ENCODE measurements at regions of chr1 and their contacts with region 1.

Region 1: GRCh38 chr1:26145041-26145959 is 13.6 kb upstream of the FAM110D start:
- DNase-seq: peak; percentile 83
- H3K4me3 Mint-ChIP-seq: no peak overlapping the region
- H3K27ac Mint-ChIP-seq: no peak overlapping the region
- H3K4me1 Mint-ChIP-seq: peaks cover 2% of the 10 kb centered on the region
- H3K27me3 Mint-ChIP-seq: peaks cover 21% of the 10 kb centered on the region

Region 2: GRCh38 chr1:25971066-25971810 is 174.1 kb before region 1 on chr1:
- CTCF ChIA-PET with region 1: no interaction called
- POLR2A ChIA-PET with region 1: no interaction called
- DNase-seq: peak; percentile 39
- H3K4me3 Mint-ChIP-seq: peak overlapping the region; percentile 13
- H3K27ac Mint-ChIP-seq: peak overlapping the region; percentile 89
- H3K4me1 Mint-ChIP-seq: peaks cover 34% of the 10 kb centered on the region
- H3K27me3 Mint-ChIP-seq: no peaks in the 10 kb centered on the region

Region 3: DNA sequence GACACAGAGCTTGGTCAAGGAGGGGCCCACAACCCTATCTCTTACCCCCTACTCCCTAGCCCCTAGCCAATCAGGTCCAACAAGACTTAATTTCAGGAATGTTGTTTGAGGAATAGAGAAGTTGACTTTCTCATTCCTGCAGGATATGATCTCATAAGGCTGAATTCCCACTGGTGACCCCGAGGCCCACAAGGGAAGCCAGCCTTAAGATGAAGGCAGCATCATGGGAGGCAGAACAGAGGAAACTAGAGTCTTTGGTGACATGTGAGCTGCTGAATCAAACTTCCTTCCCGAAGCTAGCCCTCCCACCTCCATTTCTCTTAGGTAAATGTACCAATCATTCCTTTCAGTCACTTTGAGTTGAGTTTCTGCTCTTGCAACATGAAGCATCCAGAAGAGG is 42.8 kb before region 1 on chr1:
- CTCF ChIA-PET with region 1: interaction called, 44 read pairs
- POLR2A ChIA-PET with region 1: interaction called, 3 read pairs
- DNase-seq: no peak
- H3K4me3 Mint-ChIP-seq: no peak overlapping the region
- H3K27ac Mint-ChIP-seq: no peak overlapping the region
- H3K4me1 Mint-ChIP-seq: peaks cover 18% of the 10 kb centered on the region
- H3K27me3 Mint-ChIP-seq: peaks cover 11% of the 10 kb centered on the region

Region 4: DNA sequence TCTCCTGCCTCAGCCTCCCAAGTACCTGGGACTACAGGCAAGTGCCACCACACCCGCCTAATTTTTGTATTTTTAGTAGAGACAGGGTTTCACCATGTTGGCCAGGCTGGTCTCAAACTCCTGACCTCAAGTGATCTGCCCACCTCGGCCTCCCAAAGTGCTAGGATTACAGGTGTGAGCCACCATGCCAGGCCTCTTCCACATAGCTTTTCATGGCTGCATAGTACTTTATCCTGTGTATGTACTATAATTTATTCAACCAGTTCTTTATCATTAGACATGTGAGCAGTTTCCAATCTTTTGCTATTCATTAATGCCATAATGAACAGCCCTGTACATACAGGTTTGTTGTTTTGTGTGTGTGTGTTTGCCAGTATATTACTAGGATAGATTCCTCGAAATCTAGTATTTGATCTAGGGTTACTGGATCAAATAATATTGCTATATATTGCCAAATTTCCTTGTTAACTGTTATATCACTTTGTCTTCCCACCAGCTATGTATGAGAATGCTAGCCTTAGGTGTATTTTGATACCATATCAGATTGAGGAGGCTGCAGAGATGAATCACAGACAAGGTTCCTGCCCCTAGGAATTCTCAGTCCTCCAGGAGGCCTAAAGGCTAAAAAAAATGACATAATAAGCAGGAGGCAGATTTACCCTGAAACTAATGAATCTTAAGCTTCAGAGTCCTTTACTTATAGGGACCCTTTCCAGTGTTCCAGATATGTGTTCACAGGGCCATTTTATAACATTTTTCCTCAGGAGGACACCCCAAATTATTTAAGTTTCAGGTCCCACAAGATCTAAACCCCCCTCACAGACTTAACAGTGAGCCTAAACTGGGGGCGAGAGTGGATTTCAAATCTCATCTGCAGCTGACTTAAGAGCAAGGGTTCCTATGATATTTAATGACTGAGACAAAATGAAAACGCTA is 35.8 kb before region 1 on chr1:
- CTCF ChIA-PET with region 1: interaction called, 44 read pairs
- POLR2A ChIA-PET with region 1: interaction called, 3 read pairs
- DNase-seq: no peak
- H3K4me3 Mint-ChIP-seq: peak overlapping the region; percentile 83
- H3K27ac Mint-ChIP-seq: peak overlapping the region; percentile 75
- H3K4me1 Mint-ChIP-seq: peaks cover 37% of the 10 kb centered on the region
- H3K27me3 Mint-ChIP-seq: no peaks in the 10 kb centered on the region

Region 5: GRCh38 chr1:26126321-26127084 is 18.8 kb before region 1 on chr1:
- CTCF ChIA-PET with region 1: interaction called, 21 read pairs
- POLR2A ChIA-PET with region 1: no interaction called
- DNase-seq: peak; percentile 83
- H3K4me3 Mint-ChIP-seq: peak overlapping the region; percentile 80
- H3K27ac Mint-ChIP-seq: peak overlapping the region; percentile 99
- H3K4me1 Mint-ChIP-seq: peaks cover 68% of the 10 kb centered on the region
- H3K27me3 Mint-ChIP-seq: no peaks in the 10 kb centered on the region

Region 6: GRCh38 chr1:26156704-26157038 is 11.4 kb after region 1 on chr1:
- CTCF ChIA-PET with region 1: interaction called, 21 read pairs
- POLR2A ChIA-PET with region 1: no interaction called
- DNase-seq: no peak
- H3K4me3 Mint-ChIP-seq: no peak overlapping the region
- H3K27ac Mint-ChIP-seq: no peak overlapping the region
- H3K4me1 Mint-ChIP-seq: peaks cover 3% of the 10 kb centered on the region
- H3K27me3 Mint-ChIP-seq: peaks cover 52% of the 10 kb centered on the region

Region 7: GRCh38 chr1:26218906-26219494 is 73.7 kb after region 1 on chr1:
- CTCF ChIA-PET with region 1: no interaction called
- POLR2A ChIA-PET with region 1: no interaction called
- DNase-seq: no peak
- H3K4me3 Mint-ChIP-seq: no peak overlapping the region
- H3K27ac Mint-ChIP-seq: no peak overlapping the region
- H3K4me1 Mint-ChIP-seq: no peaks in the 10 kb centered on the region
- H3K27me3 Mint-ChIP-seq: peaks cover 12% of the 10 kb centered on the region